Colonic mucosa (tissue), 4 donors: ENCODE measurements at regions of chr9 and their contacts with region 1.

Region 1: GRCh38 chr9:3181049-3181953 is 337.4 kb upstream of the PUM3 start:
- DNase-seq: peak; percentile 71
- H3K4me3 ChIP-seq: peak overlapping the region; percentile 29
- H3K27ac ChIP-seq: no peak overlapping the region
- H3K4me1 ChIP-seq: no peaks in the 10 kb centered on the region
- H3K27me3 ChIP-seq: peaks cover 7% of the 10 kb centered on the region
- CTCF ChIP-seq: peak; percentile 28

Region 2: DNA sequence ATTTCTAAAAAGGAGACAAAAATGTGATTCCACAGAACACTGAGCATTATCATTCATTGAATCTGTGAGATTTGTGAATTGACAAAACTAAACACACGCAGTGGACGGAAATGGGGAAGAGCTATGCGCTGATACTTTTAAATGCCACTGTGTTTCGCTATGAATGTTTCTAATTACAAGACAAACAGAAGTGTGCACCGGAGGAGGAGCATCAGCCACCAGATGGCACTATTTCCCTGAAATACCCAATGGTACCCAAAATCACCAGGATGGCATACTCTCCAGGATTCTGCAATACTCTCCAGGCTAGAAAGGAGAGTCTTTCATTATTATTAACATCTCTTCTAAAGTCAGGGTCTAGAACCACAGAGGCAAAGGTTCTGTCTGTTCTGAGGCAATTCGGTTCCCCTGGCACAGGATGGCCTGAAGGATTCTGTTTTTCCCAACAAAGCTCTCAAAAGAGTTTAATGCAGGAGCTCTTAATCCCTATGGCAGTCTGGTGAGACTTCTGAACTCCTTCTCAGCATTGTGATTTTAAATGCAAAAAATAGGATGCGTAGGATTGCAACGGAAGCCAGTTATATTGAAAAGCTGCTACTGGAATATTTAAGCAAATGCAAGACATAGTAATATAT is 323.6 kb before region 1 on chr9:
- intact Hi-C with region 1: loop called (anchors 5 kb)
- DNase-seq: peak; percentile 78
- H3K4me3 ChIP-seq: no peak overlapping the region
- H3K27ac ChIP-seq: no peak overlapping the region
- H3K4me1 ChIP-seq: no peaks in the 10 kb centered on the region
- H3K27me3 ChIP-seq: no peaks in the 10 kb centered on the region
- CTCF ChIP-seq: peak; percentile 83

Region 3: DNA sequence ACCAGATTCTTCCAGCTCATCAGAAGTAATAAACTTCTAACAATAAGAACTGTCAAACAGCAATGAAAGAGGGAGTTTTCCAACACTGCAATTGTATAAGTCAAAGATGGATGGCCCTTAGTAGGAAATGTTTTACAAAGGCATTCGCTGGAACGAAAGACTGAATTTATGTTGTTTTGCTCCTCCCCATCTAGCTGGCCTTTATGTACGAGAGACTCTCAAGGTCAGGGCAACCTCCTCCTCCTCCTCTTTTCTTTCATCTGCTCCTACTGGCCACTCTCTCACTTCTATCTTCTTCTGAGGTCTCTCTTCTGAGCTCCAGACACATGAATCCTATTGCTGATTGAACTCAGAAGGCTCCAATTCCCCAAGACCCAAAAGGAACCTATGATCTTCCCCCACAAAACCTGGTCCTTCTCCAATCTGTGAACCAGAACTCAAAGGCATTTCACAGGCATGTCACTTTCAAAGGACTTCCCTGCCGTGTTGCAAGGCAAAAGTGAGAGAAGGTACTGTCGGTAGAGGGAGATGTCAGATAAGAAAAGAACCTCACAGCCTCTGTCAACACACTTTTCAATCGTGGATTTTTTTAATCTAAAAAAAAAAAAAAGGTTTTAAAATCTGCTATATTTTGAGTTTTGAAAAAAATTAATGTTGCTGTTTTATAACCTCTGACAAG is 308.9 kb before region 1 on chr9:
- intact Hi-C with region 1: loop called (anchors 5 kb)
- DNase-seq: no peak
- H3K4me3 ChIP-seq: no peak overlapping the region
- H3K27ac ChIP-seq: no peak overlapping the region
- H3K4me1 ChIP-seq: no peaks in the 10 kb centered on the region
- H3K27me3 ChIP-seq: no peaks in the 10 kb centered on the region
- CTCF ChIP-seq: no peak

Region 4: DNA sequence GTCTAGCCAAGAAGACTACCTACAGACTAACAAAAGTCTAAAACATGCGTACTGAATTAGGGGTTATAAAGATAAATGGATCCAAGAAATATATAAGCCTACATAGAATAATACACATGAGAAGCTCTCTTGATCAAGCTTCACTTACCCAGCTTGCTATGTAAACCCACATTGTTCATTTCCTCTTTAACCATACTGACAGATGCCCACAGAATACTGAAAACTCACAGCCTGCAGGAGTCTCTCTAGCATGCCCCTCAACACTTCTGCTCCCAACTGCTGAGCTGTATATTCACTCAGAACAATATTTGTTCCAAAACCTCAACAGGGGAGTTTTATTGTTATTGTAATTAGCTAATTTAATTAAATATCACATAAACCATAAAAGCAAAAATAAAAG is 292.1 kb after region 1 on chr9:
- intact Hi-C with region 1: no loop called
- DNase-seq: no peak
- H3K4me3 ChIP-seq: no peak overlapping the region
- H3K27ac ChIP-seq: no peak overlapping the region
- H3K4me1 ChIP-seq: no peaks in the 10 kb centered on the region
- H3K27me3 ChIP-seq: no peaks in the 10 kb centered on the region
- CTCF ChIP-seq: no peak

Region 5: GRCh38 chr9:3675946-3676345 is 494.6 kb after region 1 on chr9:
- intact Hi-C with region 1: no loop called
- DNase-seq: no peak
- H3K4me3 ChIP-seq: no peak overlapping the region
- H3K27ac ChIP-seq: no peak overlapping the region
- H3K4me1 ChIP-seq: no peaks in the 10 kb centered on the region
- H3K27me3 ChIP-seq: no peaks in the 10 kb centered on the region
- CTCF ChIP-seq: no peak